ENCODE measurements at regions of chr11 and their contacts with region 1.

Region 1: GRCh38 chr11:114136686-114137640 is 77.5 kb downstream of the ZBTB16 start:
- DNase-seq: no peak
- ATAC-seq: no peak

Region 2: GRCh38 chr11:114075891-114076441 is 61.0 kb before region 1 on chr11:
- intact Hi-C with region 1: no loop called
- DNase-seq: no peak
- ATAC-seq: no peak

Region 3: DNA sequence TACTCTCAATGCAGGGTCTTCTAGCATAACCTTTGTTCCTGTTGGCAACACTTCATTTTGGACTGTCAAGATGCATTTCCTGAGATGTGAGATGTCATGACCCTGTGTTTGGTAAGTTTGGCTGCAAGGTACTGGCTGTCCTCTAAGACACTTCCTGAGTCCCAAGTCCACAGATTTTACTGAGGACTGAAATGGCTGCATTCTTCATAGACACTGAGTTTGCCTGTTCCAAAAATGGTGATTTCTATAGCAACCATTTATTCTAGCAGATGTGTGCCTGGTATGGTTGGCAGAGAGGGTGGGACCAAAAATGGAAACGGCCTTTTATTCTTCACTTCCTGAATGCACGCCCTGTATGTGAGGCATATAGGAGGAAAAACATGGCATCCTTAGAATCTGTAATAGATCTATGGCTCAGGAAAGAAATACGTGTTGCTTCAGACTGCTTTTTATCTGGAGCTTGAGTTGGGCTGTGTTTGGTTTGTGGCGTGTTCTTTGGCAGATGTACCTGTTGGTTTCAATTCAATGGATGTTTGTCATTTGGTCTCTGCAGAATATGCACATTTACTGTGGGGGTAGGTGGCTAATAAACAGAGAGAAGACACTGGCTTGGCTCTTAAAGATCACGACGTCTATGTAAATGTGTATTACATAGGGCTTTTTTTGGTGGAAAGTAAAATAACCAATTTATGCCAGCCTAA is 15.0 kb before region 1 on chr11:
- intact Hi-C with region 1: loop called (anchors 1 kb)
- DNase-seq: no peak
- ATAC-seq: no peak